Activated CD4-positive, alpha-beta memory T cell treated with anti-CD3 and anti-CD28 coated beads, Interleukin-2, amount 10 ng/mL, durations not matched to agents 7 days and 5 days (primary cell): ENCODE measurements at regions of chr22 and their contacts with region 1.

Region 1: GRCh38 chr22:37862570-37863325 is 13.5 kb downstream of the EIF3L start:
- DNase-seq: no peak
- H3K4me3 Mint-ChIP-seq: no peak overlapping the region
- H3K27ac Mint-ChIP-seq: no peak overlapping the region
- H3K4me1 Mint-ChIP-seq: peaks cover 2% of the 10 kb centered on the region
- H3K27me3 Mint-ChIP-seq: no peaks in the 10 kb centered on the region

Region 2: GRCh38 chr22:37843741-37843990 is 19.1 kb before region 1 on chr22:
- CTCF ChIA-PET with region 1: interaction called, 17 read pairs
- POLR2A ChIA-PET with region 1: interaction called, 11 read pairs
- DNase-seq: peak; percentile 65
- H3K4me3 Mint-ChIP-seq: peak overlapping the region; percentile 85
- H3K27ac Mint-ChIP-seq: peak overlapping the region; percentile 85
- H3K4me1 Mint-ChIP-seq: peaks cover 33% of the 10 kb centered on the region
- H3K27me3 Mint-ChIP-seq: no peaks in the 10 kb centered on the region

Region 3: GRCh38 chr22:37849089-37849751 is 13.5 kb before region 1 on chr22 and contains the start of gene EIF3L:
- CTCF ChIA-PET with region 1: interaction called, 17 read pairs
- POLR2A ChIA-PET with region 1: interaction called, 11 read pairs
- DNase-seq: peak; percentile 91
- H3K4me3 Mint-ChIP-seq: peak within 1 kb of the TSS; percentile 84
- H3K27ac Mint-ChIP-seq: peak within 1 kb of the TSS; percentile 95
- H3K4me1 Mint-ChIP-seq: peaks cover 58% of the 10 kb centered on the region
- H3K27me3 Mint-ChIP-seq: no peaks in the 10 kb centered on the region
- total RNA-seq, gene EIF3L: 331 to 348 TPM

Region 4: GRCh38 chr22:37880668-37881440 is 18.1 kb after region 1 on chr22:
- CTCF ChIA-PET with region 1: interaction called, 16 read pairs
- POLR2A ChIA-PET with region 1: no interaction called
- DNase-seq: no peak
- H3K4me3 Mint-ChIP-seq: no peak overlapping the region
- H3K27ac Mint-ChIP-seq: no peak overlapping the region
- H3K4me1 Mint-ChIP-seq: peaks cover 2% of the 10 kb centered on the region
- H3K27me3 Mint-ChIP-seq: no peaks in the 10 kb centered on the region

Region 5: DNA sequence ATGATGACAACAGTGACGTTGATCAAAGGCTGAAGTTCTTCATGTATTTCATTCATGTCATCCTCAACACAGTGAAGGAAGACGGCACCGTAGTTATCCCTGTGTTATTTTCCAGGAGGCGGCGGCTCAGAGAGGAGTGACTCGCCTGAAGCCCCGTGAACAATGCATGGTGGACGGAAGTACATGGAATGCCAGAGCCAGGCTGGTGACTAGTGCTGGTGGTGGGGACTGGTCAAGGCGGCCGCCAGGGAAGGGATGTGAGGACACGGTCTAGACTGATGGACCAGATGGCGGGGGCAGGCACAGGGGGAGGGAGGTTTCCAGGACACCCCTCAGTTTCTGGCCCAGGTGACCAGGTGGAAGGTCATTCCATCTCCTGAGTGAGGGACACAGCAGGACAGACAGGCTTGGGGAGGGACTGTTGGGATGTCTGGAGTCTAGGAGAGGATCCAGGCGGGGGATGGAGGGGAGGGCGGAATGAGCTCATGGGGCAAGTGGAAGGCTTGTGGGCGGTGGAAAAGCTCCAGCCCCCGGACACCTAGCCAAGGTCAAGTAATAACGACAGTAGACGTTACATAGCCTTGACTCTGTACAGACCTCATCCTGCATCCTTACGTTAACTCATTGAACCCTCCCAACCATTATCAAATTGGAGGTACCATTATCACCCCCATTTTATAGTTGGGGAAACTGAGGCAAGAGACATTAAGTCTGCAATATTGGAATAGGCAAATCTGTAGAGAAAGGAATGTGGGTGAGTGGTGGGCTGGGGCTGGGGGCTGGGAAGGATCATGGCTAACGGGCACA is 178.4 kb after region 1 on chr22:
- CTCF ChIA-PET with region 1: no interaction called
- POLR2A ChIA-PET with region 1: no interaction called
- DNase-seq: no peak
- H3K4me3 Mint-ChIP-seq: no peak overlapping the region
- H3K27ac Mint-ChIP-seq: no peak overlapping the region
- H3K4me1 Mint-ChIP-seq: no peaks in the 10 kb centered on the region
- H3K27me3 Mint-ChIP-seq: no peaks in the 10 kb centered on the region